ENCODE measurements at regions of chr4 and their contacts with region 1.

Region 1: DNA sequence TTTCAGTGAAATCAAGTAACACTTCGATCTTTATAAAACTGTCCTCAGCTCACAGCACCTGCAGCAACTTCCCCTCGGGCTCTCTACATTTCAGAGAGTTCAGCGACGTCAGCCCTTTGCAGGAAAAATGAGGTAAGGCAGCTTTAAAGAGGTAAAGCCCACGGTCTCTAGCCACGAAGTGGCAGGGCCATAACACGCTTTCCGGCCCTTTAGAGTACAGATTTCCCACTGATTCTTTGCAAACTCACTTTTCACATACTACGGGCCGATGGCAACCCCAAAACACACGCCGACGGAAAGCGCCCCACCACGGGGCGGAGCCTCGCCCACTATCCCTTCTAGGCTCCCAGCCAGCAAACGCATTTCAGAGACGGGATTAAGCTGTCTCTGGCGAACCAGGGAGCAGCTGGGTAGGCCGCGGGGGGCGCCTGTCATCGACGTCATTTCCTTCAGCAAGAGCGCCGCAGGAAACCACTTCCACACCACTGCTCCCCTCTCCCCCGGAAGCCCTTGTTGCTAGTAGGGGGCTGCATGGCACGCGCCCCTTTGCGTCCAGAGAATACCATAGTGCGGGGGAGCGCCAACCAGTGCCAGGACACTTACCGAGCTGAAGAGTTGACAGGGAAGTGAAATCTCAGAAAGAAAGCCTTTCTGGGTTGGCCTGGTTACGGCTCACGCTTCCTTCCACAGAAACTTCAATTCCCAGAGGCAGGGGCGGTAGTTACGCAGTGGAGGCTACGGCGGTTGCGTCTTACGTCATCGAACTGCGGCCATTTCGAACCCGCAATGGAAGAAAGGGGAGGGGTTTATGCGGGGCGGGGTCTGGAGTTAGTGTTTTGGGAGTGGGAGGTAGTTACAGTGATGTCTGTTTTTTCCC is at the start of gene TRMT10A:
- DNase-seq: peak; percentile 97
- H3K4me3 ChIP-seq: peak within 1 kb of the TSS; percentile 53 to 68
- H3K27ac ChIP-seq: peak within 1 kb of the TSS; percentile 94 to 95
- H3K4me1 ChIP-seq: no peaks in the 10 kb centered on the region
- H3K27me3 ChIP-seq: no peaks in the 10 kb centered on the region
- CTCF ChIP-seq: peak in 2 of 4 experiments; percentile 29 to 34
- POLR2A ChIP-seq: peak; percentile 37
- total RNA-seq, gene TRMT10A: 7.2 to 8.0 TPM

Region 2: GRCh38 chr4:99615170-99615820 is 51.7 kb after region 1 on chr4:
- intact Hi-C with region 1: loop called (anchors 2 kb)
- DNase-seq: no peak
- H3K4me3 ChIP-seq: no peak overlapping the region
- H3K27ac ChIP-seq: no peak overlapping the region
- H3K4me1 ChIP-seq: no peaks in the 10 kb centered on the region
- H3K27me3 ChIP-seq: no peaks in the 10 kb centered on the region
- CTCF ChIP-seq: no peak
- POLR2A ChIP-seq: no peak

Region 3: DNA sequence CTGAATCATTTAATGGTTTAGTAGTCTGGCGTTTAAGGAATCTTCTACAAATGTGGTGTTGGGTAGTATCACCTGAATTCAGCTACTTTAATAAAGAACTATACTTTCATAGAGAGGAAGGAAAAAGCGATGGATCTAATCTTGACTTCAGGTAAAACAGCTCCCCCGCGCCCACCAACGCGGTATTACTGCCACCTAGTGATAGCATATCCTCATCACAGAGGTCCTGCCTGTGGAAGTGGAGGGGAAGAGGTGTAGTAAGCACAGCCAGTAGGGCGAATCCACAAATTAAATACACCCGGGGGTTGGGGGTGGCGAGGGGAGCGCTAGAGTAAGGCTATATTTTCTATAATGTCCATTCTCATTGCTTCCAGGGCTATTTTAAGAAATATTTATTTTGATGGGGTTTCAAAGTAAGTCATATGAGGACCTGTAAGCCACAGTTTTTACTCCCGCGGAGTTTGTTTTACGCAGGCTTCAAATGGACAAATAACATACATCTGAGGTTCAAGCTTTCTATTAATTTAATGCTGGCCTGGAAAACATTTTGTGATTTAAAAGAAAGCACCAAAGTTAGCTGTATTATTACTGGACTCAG is 244.8 kb after region 1 on chr4:
- intact Hi-C with region 1: loop called (anchors 10 kb)
- DNase-seq: peak; percentile 23
- H3K4me3 ChIP-seq: no peak overlapping the region
- H3K27ac ChIP-seq: no peak overlapping the region
- H3K4me1 ChIP-seq: no peaks in the 10 kb centered on the region
- H3K27me3 ChIP-seq: no peaks in the 10 kb centered on the region
- CTCF ChIP-seq: peak in 3 of 4 experiments; percentile 28 to 54 (median 43)
- POLR2A ChIP-seq: no peak

Region 4: GRCh38 chr4:99885063-99885664 is 321.6 kb after region 1 on chr4:
- intact Hi-C with region 1: loop called (anchors 5 kb)
- DNase-seq: no peak
- H3K4me3 ChIP-seq: no peak overlapping the region
- H3K27ac ChIP-seq: no peak overlapping the region
- H3K4me1 ChIP-seq: no peaks in the 10 kb centered on the region
- H3K27me3 ChIP-seq: peaks cover 2% of the 10 kb centered on the region
- CTCF ChIP-seq: peak in 3 of 4 experiments; percentile 33 to 73 (median 60)
- POLR2A ChIP-seq: no peak

Region 5: DNA sequence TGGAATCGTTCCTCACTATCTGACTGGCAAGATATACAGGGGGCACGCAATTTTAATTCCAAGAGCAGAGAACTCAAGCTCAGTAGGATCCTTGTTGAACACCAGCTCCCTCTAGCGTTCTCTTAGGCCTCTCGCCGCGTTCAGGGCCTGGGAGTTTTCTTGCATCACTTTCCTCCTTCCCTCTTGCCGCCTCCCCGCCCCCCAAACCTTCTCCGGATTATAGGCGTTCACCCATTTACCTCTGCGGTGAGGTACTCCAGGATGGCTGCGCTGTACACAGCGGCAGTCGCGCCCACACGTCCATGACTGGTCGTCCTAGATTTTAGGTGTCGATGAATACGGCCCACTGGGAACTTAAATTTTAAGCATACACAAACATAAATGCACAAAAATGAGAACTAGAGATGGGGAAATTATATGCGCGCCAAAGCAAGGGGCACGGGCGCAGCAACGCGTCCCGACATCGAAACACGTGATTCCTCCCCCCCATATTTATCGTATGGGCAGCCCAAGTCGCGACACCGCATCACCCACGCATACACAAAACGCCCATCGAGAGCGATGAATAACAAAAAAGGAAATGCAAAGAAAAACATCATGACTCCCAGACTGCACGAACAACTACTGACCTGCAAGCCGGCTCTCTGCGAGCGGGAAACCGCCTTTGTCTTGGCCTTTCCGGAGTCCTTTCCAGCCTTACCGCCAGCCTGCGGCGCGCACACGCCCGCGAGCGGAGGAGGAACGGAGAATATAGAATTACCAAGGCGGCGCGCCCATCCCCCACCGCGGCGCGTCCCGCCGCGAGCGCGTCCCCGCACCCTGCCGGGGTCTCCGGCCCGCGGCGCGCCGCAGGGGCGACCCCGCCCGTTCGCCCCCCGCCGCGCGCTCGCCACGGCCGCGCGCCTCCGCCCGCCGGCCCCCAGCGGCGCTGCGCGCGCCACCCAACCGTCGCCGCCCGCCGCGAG is 385.8 kb after region 1 on chr4:
- intact Hi-C with region 1: loop called (anchors 2 kb)
- DNase-seq: peak; percentile 93
- H3K4me3 ChIP-seq: peak overlapping the region; percentile 72 to 82
- H3K27ac ChIP-seq: peak overlapping the region; percentile 94 to 97
- H3K4me1 ChIP-seq: peaks cover 6% of the 10 kb centered on the region
- H3K27me3 ChIP-seq: no peaks in the 10 kb centered on the region
- CTCF ChIP-seq: peak in 3 of 4 experiments; percentile 81 to 88 (median 88)
- POLR2A ChIP-seq: peak; percentile 43